ENCODE measurements at regions of chr14 and their contacts with region 1.

Region 1: GRCh38 chr14:54805521-54806322 is 96.9 kb downstream of the GCH1 start:
- DNase-seq: peak; percentile 77
- ATAC-seq: peak; percentile 96
- H3K4me3 ChIP-seq: no peak overlapping the region
- H3K27ac ChIP-seq: no peak overlapping the region
- H3K4me1 ChIP-seq: peaks cover 3% of the 10 kb centered on the region; the same call in 1 of the 2 replicates
- H3K27me3 ChIP-seq: no peaks in the 10 kb centered on the region; the same call in none of the 2 replicates
- CTCF ChIP-seq: peak; percentile 94
- POLR2A ChIP-seq: no peak
- RAD21 ChIP-seq: peak; percentile 96

Region 2: DNA sequence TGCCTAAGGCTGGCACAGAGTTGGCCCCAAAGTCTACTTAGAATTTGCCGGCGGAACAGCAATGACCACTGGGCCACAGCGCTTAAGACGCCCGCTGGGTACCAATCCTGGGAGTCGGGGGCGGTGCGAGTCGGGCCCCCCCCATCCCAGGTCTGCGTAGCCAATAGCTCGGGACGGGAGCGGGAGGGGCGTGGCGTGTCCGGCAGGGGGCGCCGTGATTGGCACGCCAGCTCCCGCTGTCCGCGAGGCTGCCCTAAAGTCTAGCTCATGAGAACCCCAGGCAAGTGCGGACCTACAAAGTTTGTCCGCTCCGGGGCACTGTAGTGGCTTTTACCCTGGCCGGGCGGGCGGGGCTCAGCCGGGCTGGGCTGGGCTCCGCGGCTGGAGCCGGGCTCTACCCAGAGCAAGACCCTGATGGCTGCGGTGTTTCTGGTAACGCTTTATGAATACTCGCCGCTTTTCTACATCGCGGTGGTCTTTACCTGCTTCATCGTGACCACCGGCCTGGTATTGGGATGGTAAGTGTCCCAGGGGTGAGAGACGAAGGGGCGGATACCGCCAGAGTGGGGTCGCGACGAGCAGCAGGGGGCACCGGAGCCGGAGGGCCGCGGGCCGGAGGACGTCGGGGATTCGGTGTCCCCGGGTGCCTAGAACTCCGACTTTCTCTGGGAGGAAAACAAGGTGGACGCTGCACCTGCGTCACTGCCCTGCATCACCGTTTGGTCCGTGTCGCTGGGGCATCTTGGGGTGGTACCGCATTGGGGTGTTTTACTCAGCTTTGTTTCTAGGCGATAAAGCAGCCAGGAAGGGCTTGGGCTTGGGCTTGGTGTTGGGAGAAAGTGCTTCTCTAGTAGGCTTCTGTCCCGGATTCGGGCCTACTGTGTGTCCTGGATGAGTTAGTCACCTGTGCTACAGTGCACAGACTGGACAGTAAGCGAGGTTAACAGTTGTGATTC is 295.9 kb before region 1 on chr14 and contains the start of gene CGRRF1:
- CTCF ChIA-PET with region 1: interaction called, 3 read pairs
- POLR2A ChIA-PET with region 1: no interaction called
- dilution Hi-C with region 1: no loop called
- in situ Hi-C with region 1: no loop called
- intact Hi-C with region 1: loop called (anchors 5 kb)
- DNase-seq: peak; percentile 98
- ATAC-seq: peak; percentile 99
- H3K4me3 ChIP-seq: peak within 1 kb of the TSS; percentile 84
- H3K27ac ChIP-seq: peak within 1 kb of the TSS; percentile 90
- H3K4me1 ChIP-seq: peaks cover 2% of the 10 kb centered on the region; the same call in 1 of the 2 replicates
- H3K27me3 ChIP-seq: peaks cover 3% of the 10 kb centered on the region; the same call in 1 of the 2 replicates
- CTCF ChIP-seq: peak; percentile 48
- POLR2A ChIP-seq: peak; percentile 65; the same call in 1 of the 2 replicates
- RAD21 ChIP-seq: no peak; the same call in 1 of the 2 replicates
- total RNA-seq, gene CGRRF1: 13.8 and 15.3 TPM in 2 replicates

Region 3: DNA sequence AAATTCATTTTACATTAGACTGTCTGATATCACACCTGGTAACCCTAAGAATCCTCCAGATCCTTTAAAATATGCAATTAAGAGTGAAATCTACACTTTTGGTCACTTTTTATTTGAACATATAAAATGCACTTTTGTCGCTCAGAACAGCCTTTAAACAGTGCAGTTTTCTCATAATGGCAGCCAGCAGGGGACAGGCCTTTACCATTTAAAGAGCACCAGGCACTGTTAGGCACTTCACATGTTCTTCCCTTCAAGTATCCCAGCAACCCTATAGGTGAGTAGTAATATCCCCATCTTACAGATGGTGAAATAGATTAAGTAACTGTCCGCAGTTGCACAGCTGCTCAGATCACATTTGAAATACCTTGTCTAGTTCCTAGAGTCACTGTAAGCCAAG is 250.1 kb before region 1 on chr14:
- CTCF ChIA-PET with region 1: no interaction called
- POLR2A ChIA-PET with region 1: no interaction called
- dilution Hi-C with region 1: no loop called
- in situ Hi-C with region 1: loop called (anchors 10 kb)
- intact Hi-C with region 1: no loop called
- DNase-seq: no peak
- ATAC-seq: no peak
- H3K4me3 ChIP-seq: no peak overlapping the region
- H3K27ac ChIP-seq: no peak overlapping the region
- H3K4me1 ChIP-seq: peaks cover 6% of the 10 kb centered on the region
- H3K27me3 ChIP-seq: no peaks in the 10 kb centered on the region
- CTCF ChIP-seq: peak; percentile 20; the same call in 1 of the 2 replicates
- POLR2A ChIP-seq: no peak
- RAD21 ChIP-seq: no peak